ENCODE measurements at regions of chr17 and their contacts with region 1.

Region 1: GRCh38 chr17:58631523-58632323 is 60.1 kb downstream of the TEX14 start:
- DNase-seq: peak; percentile 97
- ATAC-seq: peak; percentile 89
- H3K4me3 Mint-ChIP-seq: no peak overlapping the region
- H3K27ac Mint-ChIP-seq: no peak overlapping the region
- H3K4me1 Mint-ChIP-seq: peaks cover 10% of the 10 kb centered on the region
- H3K27me3 Mint-ChIP-seq: no peaks in the 10 kb centered on the region

Region 2: DNA sequence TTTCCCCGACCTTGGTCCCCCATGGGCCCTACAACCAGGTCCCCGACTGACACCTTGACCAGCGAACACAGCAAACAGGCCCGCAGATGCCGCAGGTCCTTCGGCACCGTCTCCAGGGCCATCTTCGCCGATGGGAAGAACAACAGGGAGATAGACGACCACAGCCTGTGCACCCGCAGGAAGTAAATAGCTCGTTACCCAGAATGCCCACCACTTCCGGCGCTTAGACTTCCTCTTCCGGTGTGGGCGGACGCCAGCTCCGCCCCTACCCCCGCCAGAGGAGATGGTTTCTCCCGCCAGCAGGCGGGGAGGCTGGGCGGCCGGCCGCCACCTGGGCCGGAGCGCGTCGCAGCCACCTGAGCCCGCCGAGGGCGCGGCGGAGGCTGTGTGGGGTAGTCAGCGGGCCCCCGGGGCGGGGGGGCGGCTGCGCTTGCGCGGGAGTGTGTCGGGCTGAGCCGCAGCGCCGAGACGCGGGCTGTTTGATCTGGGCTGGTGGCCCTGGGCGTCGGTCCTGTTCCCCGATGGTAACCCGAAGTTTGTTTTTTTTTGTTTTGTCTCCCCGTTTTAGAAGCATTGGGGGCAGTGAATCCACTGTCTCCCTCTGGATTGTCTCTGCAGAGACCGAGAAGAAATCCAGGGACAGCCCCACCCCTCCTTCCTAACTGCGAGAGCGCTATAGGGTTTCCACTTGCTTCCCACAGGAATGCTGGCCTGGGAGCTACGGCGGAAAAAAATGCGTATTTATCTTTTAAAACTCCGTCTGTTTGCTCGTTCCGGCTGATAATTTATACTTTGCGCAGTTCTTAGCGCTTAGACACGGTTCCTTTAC is 279.5 kb before region 1 on chr17 and contains the start of gene SUPT4H1:
- CTCF ChIA-PET with region 1: no interaction called
- POLR2A ChIA-PET with region 1: interaction called, 12 read pairs
- DNase-seq: peak; percentile 94
- ATAC-seq: peak; percentile 91
- H3K4me3 Mint-ChIP-seq: peak within 1 kb of the TSS; percentile 100
- H3K27ac Mint-ChIP-seq: peak within 1 kb of the TSS; percentile 97
- H3K4me1 Mint-ChIP-seq: peaks cover 50% of the 10 kb centered on the region
- H3K27me3 Mint-ChIP-seq: no peaks in the 10 kb centered on the region
- total RNA-seq, gene SUPT4H1: 75.2 to 90.8 TPM

Region 3: DNA sequence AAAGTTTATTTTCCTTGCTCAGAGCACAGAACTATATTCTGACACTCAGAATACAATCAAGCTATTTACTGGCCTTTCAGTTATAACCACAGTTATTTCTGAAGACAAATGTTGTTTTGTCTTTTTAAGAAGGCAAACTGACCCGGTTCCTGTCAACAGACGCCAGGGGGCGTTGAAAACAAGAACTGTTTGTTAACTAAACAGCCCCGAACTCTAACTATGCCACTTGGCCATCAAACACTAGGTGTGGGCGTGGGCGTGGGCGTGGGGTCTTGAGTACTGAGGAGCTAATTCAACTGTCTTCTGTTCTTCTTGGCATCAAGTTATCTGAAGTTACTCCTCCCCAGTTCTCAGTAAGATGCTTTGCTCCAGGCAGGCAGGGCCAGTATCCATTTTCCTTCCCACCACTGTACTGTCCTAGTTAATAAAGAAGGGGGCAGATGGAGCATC is 54.1 kb before region 1 on chr17:
- CTCF ChIA-PET with region 1: interaction called, 4 read pairs
- POLR2A ChIA-PET with region 1: interaction called, 33 read pairs
- DNase-seq: peak; percentile 66
- ATAC-seq: no peak
- H3K4me3 Mint-ChIP-seq: no peak overlapping the region
- H3K27ac Mint-ChIP-seq: no peak overlapping the region
- H3K4me1 Mint-ChIP-seq: peaks cover 9% of the 10 kb centered on the region
- H3K27me3 Mint-ChIP-seq: peaks cover 11% of the 10 kb centered on the region

Region 4: DNA sequence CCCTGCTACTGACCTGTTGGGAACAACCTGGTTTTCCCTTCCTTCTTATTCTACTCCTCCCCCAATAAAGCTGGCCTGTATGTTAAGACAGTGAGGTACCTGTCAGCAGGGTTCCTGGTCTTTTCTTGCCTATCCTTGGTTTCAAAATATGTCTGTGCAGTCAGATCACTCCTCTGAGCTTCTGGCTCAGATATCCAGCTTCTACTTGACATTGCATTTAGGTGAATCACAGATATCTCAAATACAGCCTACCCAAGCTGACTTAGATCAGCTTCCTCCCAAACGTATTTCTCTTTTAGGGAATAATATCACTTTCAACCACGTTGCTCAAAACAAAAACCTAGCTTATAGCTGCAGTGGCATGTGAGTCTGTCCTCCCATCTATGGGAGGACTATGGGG is 11.4 kb after region 1 on chr17:
- CTCF ChIA-PET with region 1: interaction called, 3 read pairs
- POLR2A ChIA-PET with region 1: interaction called, 111 read pairs
- DNase-seq: no peak
- ATAC-seq: no peak
- H3K4me3 Mint-ChIP-seq: no peak overlapping the region
- H3K27ac Mint-ChIP-seq: no peak overlapping the region
- H3K4me1 Mint-ChIP-seq: no peaks in the 10 kb centered on the region
- H3K27me3 Mint-ChIP-seq: no peaks in the 10 kb centered on the region

Region 5: DNA sequence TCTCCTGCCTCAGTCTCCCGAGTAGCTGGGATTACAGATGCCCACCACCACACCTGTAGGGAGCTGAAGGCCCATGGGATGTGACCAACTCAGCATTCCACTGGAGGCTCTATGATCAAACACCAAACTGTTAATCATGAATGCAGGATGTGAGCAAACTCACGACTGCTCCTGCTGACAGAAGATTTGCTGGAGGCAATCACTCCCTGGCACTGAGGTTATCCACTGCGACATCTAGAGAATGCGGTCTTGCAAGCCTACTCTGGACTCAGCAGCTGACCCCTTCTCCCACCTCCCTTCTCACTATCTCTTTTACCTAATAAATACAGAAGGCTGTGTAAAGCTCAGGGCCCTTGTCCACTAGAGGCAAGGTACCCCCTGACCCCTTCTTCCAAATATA is 55.3 kb after region 1 on chr17:
- CTCF ChIA-PET with region 1: no interaction called
- POLR2A ChIA-PET with region 1: interaction called, 126 read pairs
- DNase-seq: no peak
- ATAC-seq: no peak
- H3K4me3 Mint-ChIP-seq: no peak overlapping the region
- H3K27ac Mint-ChIP-seq: no peak overlapping the region
- H3K4me1 Mint-ChIP-seq: peaks cover 2% of the 10 kb centered on the region
- H3K27me3 Mint-ChIP-seq: peaks cover 5% of the 10 kb centered on the region

Region 6: DNA sequence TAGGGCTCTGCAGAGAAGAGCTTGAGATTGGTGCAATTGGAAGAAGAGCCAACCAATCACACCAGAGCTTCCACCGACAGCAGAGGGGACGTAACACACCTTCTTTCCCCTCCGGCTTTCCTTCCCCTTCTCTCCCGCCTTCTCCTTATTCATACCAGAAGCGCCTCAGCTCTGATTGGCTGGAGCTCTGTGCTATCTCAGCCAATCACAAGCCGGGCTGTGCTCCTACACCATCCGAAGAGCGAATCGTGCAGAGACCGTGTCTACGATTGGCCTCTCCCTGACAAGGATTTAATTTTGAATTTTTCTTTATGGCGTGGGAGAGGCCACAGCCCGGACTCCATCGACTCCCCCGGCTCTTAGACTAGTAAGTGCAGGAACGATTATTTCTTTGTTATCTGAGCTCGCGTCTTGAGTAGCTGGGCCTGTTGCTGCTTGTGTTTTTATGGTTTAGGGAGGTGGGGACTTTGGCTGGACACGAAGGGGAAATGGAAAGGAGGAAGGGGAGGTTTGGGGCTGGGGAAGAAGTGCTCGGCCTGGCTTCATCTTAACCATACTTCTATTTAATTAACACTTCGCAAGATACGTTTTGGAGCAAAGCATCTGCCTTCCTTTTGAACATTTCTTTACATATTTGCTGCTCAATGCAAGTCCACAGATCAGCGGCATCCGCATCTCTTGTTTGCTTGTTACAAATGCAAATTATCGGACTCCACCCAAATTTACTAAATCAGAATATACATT is 523.9 kb after region 1 on chr17 and contains the start of gene PRR11:
- CTCF ChIA-PET with region 1: no interaction called
- POLR2A ChIA-PET with region 1: interaction called, 18 read pairs
- DNase-seq: peak; percentile 98
- ATAC-seq: peak; percentile 88
- H3K4me3 Mint-ChIP-seq: no peak within 1 kb of the TSS
- H3K27ac Mint-ChIP-seq: no peak within 1 kb of the TSS
- H3K4me1 Mint-ChIP-seq: peaks cover 59% of the 10 kb centered on the region
- H3K27me3 Mint-ChIP-seq: no peaks in the 10 kb centered on the region
- total RNA-seq, gene PRR11: 91.9 to 92.1 TPM